ENCODE measurements at regions of chr2 and their contacts with region 1.

Region 1: GRCh38 chr2:24046930-24047702 is at the start of gene WDCP:
- DNase-seq: peak; percentile 79
- ATAC-seq: peak; percentile 98
- H3K4me3 Mint-ChIP-seq: peak within 1 kb of the TSS; percentile 96
- H3K27ac Mint-ChIP-seq: peak within 1 kb of the TSS; percentile 89
- H3K4me1 Mint-ChIP-seq: peaks cover 29% of the 10 kb centered on the region
- H3K27me3 Mint-ChIP-seq: no peaks in the 10 kb centered on the region
- CTCF ChIP-seq: no peak
- total RNA-seq, gene WDCP: 20.0 and 20.6 TPM in 2 replicates

Region 2: DNA sequence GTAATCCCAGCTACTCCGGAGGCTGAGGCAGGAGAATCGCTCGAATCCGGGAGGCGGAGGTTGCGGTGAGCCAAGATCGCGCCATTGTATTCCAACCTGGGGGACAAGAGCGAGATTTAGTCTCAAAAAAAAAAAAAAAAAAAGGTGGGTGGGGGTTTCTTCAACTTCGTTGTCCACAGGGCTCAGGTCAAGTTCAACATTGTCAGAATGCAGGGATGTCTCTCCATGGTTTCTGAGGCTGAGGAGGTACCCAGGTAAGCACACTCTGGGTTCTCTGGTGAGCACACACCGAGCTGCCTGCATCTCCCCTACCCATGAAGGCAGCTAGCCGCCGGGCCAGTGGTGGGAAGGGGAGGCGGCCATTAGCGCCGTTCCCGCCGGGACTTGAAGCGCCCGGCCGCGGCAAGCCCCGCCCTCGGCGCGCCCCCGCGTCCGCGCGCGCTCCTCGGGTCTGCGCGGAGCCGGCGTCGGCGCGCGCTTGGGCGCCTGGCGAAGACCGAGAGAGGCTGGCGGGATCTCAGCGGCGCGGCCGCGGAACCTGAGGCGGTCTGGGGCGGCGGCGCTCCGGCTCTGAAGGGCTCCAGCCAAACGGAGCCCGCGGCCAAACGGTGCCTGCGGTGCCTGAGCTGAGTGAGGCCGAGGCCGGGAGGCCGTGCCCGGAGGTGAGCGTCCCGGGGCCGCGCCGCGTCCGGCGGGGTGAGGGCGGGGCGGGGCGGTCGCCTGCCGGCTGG is 107.0 kb before region 1 on chr2 and contains the start of gene UBXN2A:
- CTCF ChIA-PET with region 1: no interaction called
- POLR2A ChIA-PET with region 1: interaction called, 4 read pairs
- intact Hi-C with region 1: loop called (anchors 1 kb)
- DNase-seq: peak; percentile 87
- ATAC-seq: peak; percentile 82
- H3K4me3 Mint-ChIP-seq: peak within 1 kb of the TSS; percentile 88
- H3K27ac Mint-ChIP-seq: peak within 1 kb of the TSS; percentile 81
- H3K4me1 Mint-ChIP-seq: peaks cover 13% of the 10 kb centered on the region
- H3K27me3 Mint-ChIP-seq: no peaks in the 10 kb centered on the region
- CTCF ChIP-seq: no peak
- total RNA-seq, gene UBXN2A: 9.4 and 12.8 TPM in 2 replicates

Region 3: DNA sequence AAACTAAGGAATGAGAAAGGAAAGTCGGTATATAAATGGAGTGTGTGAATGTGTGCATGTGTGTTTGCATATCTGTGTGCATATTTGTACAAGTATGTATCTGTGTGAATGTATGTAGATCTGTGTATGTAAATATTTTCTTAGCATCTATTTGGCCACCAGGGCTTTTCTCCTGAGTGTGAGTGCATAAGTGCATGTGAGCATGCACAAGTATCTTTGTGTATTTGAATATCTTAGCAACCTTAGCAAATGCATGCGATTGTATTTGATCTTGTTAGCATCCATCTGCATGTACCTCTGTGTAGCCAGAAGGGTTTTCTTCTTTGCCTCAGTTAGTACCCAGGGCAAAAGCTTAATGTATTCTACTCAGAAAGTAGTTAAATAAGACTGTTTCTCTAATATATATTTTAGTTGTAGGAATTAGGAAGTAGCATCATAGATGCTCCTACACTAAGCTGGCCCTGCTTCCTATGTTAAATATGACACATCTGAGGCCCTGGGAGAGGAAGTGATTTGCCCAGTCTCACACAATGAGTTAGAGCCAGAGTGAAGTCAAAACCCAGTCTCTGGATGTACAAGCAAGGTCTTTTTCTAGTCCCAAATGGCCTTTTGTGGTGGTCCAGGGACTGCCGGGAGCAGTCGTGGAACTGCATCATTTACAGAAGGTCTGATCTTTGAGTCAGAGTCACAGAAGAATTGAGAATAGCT is 11.6 kb after region 1 on chr2:
- CTCF ChIA-PET with region 1: no interaction called
- POLR2A ChIA-PET with region 1: interaction called, 10 read pairs
- intact Hi-C with region 1: no loop called
- DNase-seq: no peak
- ATAC-seq: no peak
- H3K4me3 Mint-ChIP-seq: no peak overlapping the region
- H3K27ac Mint-ChIP-seq: no peak overlapping the region
- H3K4me1 Mint-ChIP-seq: no peaks in the 10 kb centered on the region
- H3K27me3 Mint-ChIP-seq: no peaks in the 10 kb centered on the region
- CTCF ChIP-seq: no peak

Region 4: DNA sequence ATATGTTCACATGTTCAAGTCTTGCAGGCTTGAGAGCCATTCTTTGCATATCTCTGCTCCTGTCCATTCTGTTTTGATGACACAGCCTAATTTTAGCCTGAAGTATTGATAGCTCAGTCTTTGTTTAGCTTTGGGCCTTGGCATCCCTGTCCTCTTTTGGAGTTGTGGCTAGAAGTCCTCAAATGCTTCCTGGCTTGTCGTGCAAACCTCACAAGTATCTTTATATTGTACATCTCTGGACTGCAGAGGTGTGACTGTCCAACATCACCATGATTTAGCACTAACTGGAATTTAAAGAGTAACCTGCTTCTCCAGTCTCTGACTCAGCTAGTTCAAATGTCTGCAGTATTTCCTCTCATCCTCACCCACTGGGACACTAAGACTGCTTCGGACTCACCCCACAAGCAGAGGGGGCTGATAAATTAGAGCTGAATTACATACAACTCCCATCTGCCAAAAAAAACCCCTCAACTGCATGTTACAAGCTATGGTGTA is 64.3 kb after region 1 on chr2:
- CTCF ChIA-PET with region 1: no interaction called
- POLR2A ChIA-PET with region 1: no interaction called
- intact Hi-C with region 1: no loop called
- DNase-seq: no peak
- ATAC-seq: no peak
- H3K4me3 Mint-ChIP-seq: no peak overlapping the region
- H3K27ac Mint-ChIP-seq: no peak overlapping the region
- H3K4me1 Mint-ChIP-seq: peaks cover 1% of the 10 kb centered on the region
- H3K27me3 Mint-ChIP-seq: no peaks in the 10 kb centered on the region
- CTCF ChIP-seq: no peak

Region 5: DNA sequence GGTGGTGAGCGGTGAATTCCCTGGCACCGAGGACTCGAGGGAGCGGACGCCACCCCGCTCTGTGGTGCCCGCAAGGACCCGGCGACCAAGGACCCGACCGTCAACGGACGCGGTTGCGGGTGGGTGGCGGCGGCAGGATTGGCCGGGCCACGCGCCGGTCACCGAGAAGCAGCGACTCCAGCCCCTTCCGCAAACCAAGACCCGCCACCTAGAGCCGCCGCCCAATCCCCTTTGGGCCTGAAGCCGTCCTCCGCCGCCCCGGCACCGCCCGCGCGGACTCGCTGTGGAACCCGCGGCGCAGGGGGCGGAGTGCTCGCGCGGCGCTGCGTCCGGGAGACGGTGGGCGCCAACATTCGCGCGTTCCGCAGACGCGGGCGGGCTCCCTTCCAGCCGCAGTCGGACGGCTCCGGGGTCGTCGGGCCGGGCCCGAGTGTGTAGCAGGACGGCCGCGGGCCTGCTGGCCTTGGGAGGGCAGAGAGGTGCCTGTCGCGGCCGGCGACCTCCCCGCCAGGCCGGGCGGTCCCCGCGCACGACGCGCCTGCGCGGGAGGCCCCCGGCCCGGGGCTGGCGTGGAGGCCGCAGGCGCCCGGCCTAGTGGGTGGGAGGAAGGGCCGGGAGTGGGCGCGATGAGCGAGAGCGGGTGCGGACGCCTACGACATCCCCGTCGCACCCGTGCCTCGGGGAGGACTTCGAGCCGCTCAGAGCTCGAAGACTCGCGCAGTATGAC is 76.2 kb after region 1 on chr2 and contains the starts of genes FAM228B and PFN4:
- CTCF ChIA-PET with region 1: no interaction called
- POLR2A ChIA-PET with region 1: interaction called, 4 read pairs
- intact Hi-C with region 1: loop called (anchors 2 kb)
- DNase-seq: peak; percentile 82
- ATAC-seq: peak; percentile 93
- H3K4me3 Mint-ChIP-seq: peak within 1 kb of the TSS; percentile 85
- H3K27ac Mint-ChIP-seq: peak within 1 kb of the TSS; percentile 92
- H3K4me1 Mint-ChIP-seq: peaks cover 15% of the 10 kb centered on the region
- H3K27me3 Mint-ChIP-seq: no peaks in the 10 kb centered on the region
- CTCF ChIP-seq: no peak
- total RNA-seq, gene FAM228B: 24.7 and 26.2 TPM in 2 replicates
- total RNA-seq, gene PFN4: 0.34 and 0.60 TPM in 2 replicates

Region 6: GRCh38 chr2:24471662-24472061 is 424.5 kb after region 1 on chr2:
- CTCF ChIA-PET with region 1: no interaction called
- POLR2A ChIA-PET with region 1: no interaction called
- intact Hi-C with region 1: no loop called
- DNase-seq: no peak
- ATAC-seq: no peak
- H3K4me3 Mint-ChIP-seq: no peak overlapping the region
- H3K27ac Mint-ChIP-seq: no peak overlapping the region
- H3K4me1 Mint-ChIP-seq: no peaks in the 10 kb centered on the region
- H3K27me3 Mint-ChIP-seq: no peaks in the 10 kb centered on the region
- CTCF ChIP-seq: no peak